Head of caudate nucleus (tissue), 42 donors: ENCODE measurements at regions of chr1 and their contacts with region 1.

Region 1: GRCh38 chr1:227449051-227449450 is 114.3 kb upstream of the ZNF678 start:
- DNase-seq: peak in 1 of 42 donors; percentile 60

Region 2: GRCh38 chr1:227234998-227235405 is 214.0 kb before region 1 on chr1:
- intact Hi-C with region 1: loop called (anchors 10 kb)
- DNase-seq: peak in 24 of 42 donors; percentile 8 to 74 (median 48)

Region 3: GRCh38 chr1:227330684-227331083 is 118.4 kb before region 1 on chr1:
- intact Hi-C with region 1: no loop called
- DNase-seq: no peak